ENCODE measurements at regions of chr1 and their contacts with region 1.

Region 1: DNA sequence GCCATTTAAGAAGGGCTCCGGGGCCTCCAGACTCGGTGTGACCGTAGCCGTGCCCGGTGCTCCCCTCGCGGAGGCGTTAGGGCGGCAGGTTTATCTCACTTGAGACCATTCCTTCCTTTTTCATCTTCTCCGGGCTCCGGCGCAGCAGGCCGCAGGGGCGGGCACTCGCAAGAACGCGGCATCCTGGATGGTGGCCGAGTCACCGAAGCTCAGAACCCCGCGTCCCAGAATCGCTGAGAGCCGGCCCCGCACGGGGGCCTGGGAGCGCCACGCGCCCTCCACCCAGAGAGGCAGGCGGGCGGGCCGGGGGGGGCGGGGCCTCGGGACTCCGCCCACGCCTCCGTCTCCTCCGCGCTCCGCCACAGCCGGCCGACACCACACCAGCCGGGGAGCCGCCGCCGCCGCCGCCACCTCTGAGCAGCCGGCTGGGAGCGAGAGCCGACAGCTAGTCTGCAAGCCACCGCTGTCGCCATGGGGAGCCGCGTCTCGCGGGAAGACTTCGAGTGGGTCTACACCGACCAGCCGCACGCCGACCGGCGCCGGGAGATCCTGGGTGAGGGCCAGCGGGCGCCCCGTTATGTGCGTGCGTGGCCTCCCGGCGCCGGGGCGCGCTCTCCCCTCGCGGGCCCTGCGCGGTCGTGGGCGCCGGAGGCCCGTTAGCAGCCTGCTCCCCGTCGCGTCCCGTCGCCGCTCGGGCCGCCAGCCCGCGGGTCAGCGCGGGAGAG is at the start of gene DEGS1:
- DNase-seq: peak; percentile 83
- ATAC-seq: peak; percentile 80
- H3K4me3 Mint-ChIP-seq: peak within 1 kb of the TSS; percentile 90
- H3K27ac Mint-ChIP-seq: peak within 1 kb of the TSS; percentile 91
- H3K4me1 Mint-ChIP-seq: peaks cover 58% of the 10 kb centered on the region
- H3K27me3 Mint-ChIP-seq: no peaks in the 10 kb centered on the region
- CTCF ChIP-seq: no peak
- total RNA-seq, gene DEGS1: 55.5 and 55.9 TPM in 2 replicates

Region 2: DNA sequence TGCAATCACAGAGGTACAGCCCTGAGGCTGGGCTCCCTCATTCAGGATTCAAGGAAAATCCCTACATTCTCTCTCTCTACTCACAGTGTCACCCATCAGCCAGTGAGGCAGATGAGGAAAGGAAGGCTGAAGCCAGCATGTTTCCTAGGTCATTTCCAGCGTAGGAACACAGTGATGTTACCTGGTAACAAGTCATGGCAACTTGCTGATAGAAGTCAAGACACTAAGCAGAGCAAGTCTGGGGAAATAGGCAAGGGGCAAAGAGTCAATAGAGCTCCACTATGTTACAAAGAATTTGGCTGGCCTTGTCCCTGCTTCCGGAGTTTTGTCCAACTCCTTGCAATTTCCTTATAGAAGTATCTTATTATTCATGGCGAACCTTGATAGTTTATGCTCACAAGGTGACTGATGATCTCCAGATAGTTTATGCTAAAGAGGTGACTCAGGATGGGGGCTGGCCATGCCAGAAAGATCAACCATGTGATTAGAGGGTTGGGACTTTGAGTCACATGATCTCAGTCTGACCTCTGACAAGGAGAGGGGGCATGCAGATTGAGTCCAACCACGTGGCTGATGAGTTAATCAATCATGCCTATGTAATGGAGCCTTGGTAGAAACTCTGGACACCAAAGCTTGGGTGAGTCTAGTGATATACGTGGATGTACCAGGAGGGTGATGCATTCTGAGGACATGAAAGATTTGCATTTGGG is 870.2 kb before region 1 on chr1:
- CTCF ChIA-PET with region 1: no interaction called
- POLR2A ChIA-PET with region 1: no interaction called
- intact Hi-C with region 1: no loop called
- DNase-seq: no peak
- ATAC-seq: no peak
- H3K4me3 Mint-ChIP-seq: no peak overlapping the region
- H3K27ac Mint-ChIP-seq: no peak overlapping the region
- H3K4me1 Mint-ChIP-seq: no peaks in the 10 kb centered on the region
- H3K27me3 Mint-ChIP-seq: no peaks in the 10 kb centered on the region
- CTCF ChIP-seq: no peak

Region 3: DNA sequence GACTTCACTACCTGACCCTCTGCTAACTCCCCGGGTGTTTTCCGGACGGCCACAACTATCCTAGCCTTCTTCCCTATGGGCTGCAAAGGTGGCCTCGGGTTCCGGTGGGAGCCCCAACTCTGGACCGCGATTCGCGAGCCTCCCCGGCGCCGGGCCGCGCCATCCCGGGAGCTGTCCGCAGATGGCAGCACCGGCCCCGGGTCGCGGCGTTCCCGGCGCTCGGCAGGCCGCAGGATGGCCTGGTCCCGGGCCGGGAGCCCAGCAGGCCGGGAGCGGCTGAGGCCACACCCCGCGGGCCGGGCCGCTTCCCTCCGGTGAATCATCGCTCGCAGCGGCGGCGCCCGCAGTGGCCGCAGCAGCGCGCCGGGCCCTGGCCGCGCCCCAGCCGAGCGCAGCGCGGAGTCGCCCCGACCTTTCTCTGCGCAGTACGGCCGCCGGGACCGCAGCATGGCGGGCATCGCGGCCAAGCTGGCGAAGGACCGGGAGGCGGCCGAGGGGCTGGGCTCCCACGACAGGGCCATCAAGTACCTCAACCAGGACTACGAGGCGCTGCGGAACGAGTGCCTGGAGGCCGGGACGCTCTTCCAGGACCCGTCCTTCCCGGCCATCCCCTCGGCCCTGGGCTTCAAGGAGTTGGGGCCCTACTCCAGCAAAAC is 470.7 kb before region 1 on chr1 and contains the start of gene CAPN2:
- CTCF ChIA-PET with region 1: no interaction called
- POLR2A ChIA-PET with region 1: no interaction called
- intact Hi-C with region 1: no loop called
- DNase-seq: peak; percentile 67
- ATAC-seq: peak; percentile 74
- H3K4me3 Mint-ChIP-seq: peak within 1 kb of the TSS; percentile 86
- H3K27ac Mint-ChIP-seq: peak within 1 kb of the TSS; percentile 72
- H3K4me1 Mint-ChIP-seq: peaks cover 49% of the 10 kb centered on the region
- H3K27me3 Mint-ChIP-seq: no peaks in the 10 kb centered on the region
- CTCF ChIP-seq: no peak
- total RNA-seq, gene CAPN2: 50.7 and 62.6 TPM in 2 replicates

Region 4: DNA sequence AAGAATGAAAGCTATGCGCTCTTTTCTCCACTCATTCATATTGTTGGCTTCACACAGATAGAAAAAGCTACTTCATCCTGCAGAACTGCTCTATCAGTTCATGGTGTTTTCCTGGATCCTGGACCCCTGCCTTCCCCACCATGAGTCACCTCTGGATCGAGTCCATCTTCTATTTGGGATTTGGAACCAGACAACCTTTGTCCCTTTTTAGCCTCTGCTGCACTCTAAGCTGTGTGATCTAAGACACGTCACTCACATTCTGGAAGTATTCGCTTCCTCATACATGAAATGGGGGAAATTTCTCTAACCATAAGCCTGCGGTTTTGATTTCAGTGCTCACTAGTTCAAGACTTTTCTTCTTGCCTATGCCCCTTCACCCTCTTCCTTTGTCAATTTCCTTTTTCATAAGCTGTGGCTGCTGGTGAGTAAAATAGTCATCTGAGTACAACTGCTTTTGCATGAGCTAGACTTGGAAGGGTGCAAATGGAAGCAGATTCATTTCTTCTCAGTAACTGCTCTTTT is 14.1 kb before region 1 on chr1:
- CTCF ChIA-PET with region 1: interaction called, 6 read pairs
- POLR2A ChIA-PET with region 1: interaction called, 59 read pairs
- intact Hi-C with region 1: loop called (anchors 1 kb)
- DNase-seq: no peak
- ATAC-seq: peak; percentile 89
- H3K4me3 Mint-ChIP-seq: peak overlapping the region; percentile 5
- H3K27ac Mint-ChIP-seq: peak overlapping the region; percentile 8
- H3K4me1 Mint-ChIP-seq: peaks cover 35% of the 10 kb centered on the region
- H3K27me3 Mint-ChIP-seq: no peaks in the 10 kb centered on the region
- CTCF ChIP-seq: no peak

Region 5: DNA sequence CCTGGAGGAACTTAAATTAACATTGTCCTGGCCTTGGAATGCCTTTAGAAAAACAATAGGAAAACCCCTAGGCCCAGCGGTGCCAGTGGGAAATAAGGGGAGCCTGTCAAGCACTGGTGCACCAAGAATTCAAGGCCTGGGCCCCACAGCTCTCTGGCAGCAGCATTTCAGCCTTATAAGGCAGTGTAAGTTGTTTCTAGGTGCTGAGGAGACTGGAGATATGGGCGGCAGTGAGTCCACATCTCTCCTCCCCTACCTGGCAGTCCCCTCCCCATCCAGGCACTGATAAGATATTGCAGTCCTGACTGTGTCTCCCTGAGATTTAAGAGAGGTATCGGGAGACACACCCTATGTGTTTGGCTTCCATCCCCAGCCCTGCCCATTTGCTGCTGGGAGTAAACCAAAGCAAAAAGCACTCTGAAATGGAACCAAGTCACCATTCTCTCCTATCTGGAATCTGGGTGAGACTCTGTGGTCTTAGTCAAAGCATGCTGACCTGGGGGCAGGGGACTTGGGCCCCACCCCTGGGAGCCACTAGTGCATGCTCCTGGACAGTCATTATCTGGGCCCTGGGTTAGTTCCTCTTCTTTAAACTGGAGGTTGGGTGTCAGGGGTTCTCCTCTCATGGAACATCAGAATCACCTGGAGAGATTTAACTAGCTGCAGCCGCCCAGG is 30.5 kb after region 1 on chr1:
- CTCF ChIA-PET with region 1: no interaction called
- POLR2A ChIA-PET with region 1: interaction called, 13 read pairs
- intact Hi-C with region 1: loop called (anchors 1 kb)
- DNase-seq: no peak
- ATAC-seq: peak; percentile 72
- H3K4me3 Mint-ChIP-seq: no peak overlapping the region
- H3K27ac Mint-ChIP-seq: peak overlapping the region; percentile 85
- H3K4me1 Mint-ChIP-seq: peaks cover 29% of the 10 kb centered on the region
- H3K27me3 Mint-ChIP-seq: no peaks in the 10 kb centered on the region
- CTCF ChIP-seq: no peak

Region 6: GRCh38 chr1:224356685-224357625 is 173.9 kb after region 1 on chr1 and contains the start of gene CNIH4:
- CTCF ChIA-PET with region 1: no interaction called
- POLR2A ChIA-PET with region 1: no interaction called
- intact Hi-C with region 1: loop called (anchors 1 kb)
- DNase-seq: peak; percentile 76
- ATAC-seq: peak; percentile 99
- H3K4me3 Mint-ChIP-seq: peak within 1 kb of the TSS; percentile 91
- H3K27ac Mint-ChIP-seq: peak within 1 kb of the TSS; percentile 81
- H3K4me1 Mint-ChIP-seq: peaks cover 24% of the 10 kb centered on the region
- H3K27me3 Mint-ChIP-seq: no peaks in the 10 kb centered on the region
- CTCF ChIP-seq: no peak
- total RNA-seq, gene CNIH4: 16.2 and 21.0 TPM in 2 replicates

Region 7: DNA sequence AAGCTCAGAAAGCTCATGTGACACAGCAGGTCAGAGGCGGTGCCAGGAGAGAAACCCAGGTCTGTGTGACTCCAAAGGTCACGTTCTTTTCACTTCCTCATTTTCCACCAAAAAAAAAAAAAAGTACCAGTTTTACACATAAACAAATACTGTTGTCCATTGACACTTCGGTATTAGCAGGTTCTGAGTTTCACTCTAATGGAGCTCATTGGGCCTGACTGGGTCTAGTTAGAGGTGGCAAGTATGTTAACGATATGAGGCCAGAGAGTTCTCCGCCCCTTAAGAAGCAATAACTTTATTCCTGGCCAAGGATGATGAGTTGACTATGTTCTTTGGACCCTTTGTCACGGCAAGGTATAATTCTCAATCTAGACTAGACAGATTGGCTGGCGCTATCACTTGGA is 1846.1 kb after region 1 on chr1:
- CTCF ChIA-PET with region 1: no interaction called
- POLR2A ChIA-PET with region 1: no interaction called
- intact Hi-C with region 1: loop called (anchors 10 kb)
- DNase-seq: peak; percentile 39
- ATAC-seq: peak; percentile 86
- H3K4me3 Mint-ChIP-seq: peak overlapping the region; percentile 68
- H3K27ac Mint-ChIP-seq: peak overlapping the region; percentile 94
- H3K4me1 Mint-ChIP-seq: peaks cover 45% of the 10 kb centered on the region
- H3K27me3 Mint-ChIP-seq: no peaks in the 10 kb centered on the region
- CTCF ChIP-seq: no peak